Heart right ventricle (tissue), 16 donors: ENCODE measurements at regions of chr15 and their contacts with region 1.

Region 1: DNA sequence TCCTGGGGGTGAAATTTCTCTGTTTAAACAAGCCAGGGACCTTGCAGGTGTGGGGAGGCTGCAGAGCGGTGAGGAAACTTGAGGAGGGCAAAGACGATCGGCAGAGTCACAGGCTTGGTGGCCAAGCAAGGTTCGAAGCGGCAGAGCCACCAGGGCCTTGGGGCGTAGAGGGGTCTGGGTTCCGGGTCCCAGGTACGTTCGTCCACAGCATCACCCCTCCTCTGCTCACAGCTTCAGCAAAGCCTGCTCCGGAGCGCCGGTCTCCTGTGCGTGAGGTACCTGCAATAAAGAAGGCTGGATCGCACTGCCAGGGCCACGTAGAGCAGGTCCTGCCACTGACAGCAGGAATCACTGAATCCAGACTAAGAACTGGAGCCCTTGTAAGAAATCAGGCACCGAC is 66.8 kb upstream of the PCSK6 start:
- DNase-seq: no peak
- ATAC-seq: no peak
- H3K4me3 ChIP-seq: no peak overlapping the region
- H3K27ac ChIP-seq: no peak overlapping the region
- H3K4me1 ChIP-seq: peaks cover 0 to 14% (median 0%) of the 10 kb centered on the region in 9 donors
- H3K27me3 ChIP-seq: peaks cover 0 to 8% (median 3%) of the 10 kb centered on the region in 7 donors
- CTCF ChIP-seq: no peak

Region 2: GRCh38 chr15:101528108-101528916 is 28.0 kb before region 1 on chr15:
- intact Hi-C with region 1: loop called in 1 of 10 experiments (anchors 2 kb)
- DNase-seq: peak; percentile 33 to 56
- ATAC-seq: peak; percentile 74 to 91 (median 89)
- H3K4me3 ChIP-seq: peak overlapping the region in 1 of 10 donors; percentile 7
- H3K27ac ChIP-seq: peak overlapping the region in 9 of 10 donors; percentile 9 to 73 (median 48)
- H3K4me1 ChIP-seq: peaks cover 6 to 24% (median 17%) of the 10 kb centered on the region in 9 donors
- H3K27me3 ChIP-seq: peaks cover 0 to 7% (median 0%) of the 10 kb centered on the region in 7 donors
- CTCF ChIP-seq: no peak